Caco-2 (cell line): ENCODE measurements at regions of chr16 and their contacts with region 1.

Region 1: GRCh38 chr16:13414154-13414553 is 505.8 kb upstream of the ERCC4 start:
- DNase-seq: no peak
- H3K4me3 ChIP-seq: no peak overlapping the region
- H3K4me3 Mint-ChIP-seq: no peak overlapping the region
- H3K27ac Mint-ChIP-seq: no peak overlapping the region
- H3K4me1 ChIP-seq: no peaks in the 10 kb centered on the region
- H3K4me1 Mint-ChIP-seq: no peaks in the 10 kb centered on the region
- H3K27me3 ChIP-seq: no peaks in the 10 kb centered on the region
- H3K27me3 Mint-ChIP-seq: peaks cover 7% of the 10 kb centered on the region
- CTCF ChIP-seq: no peak

Region 2: GRCh38 chr16:13036600-13036999 is 377.6 kb before region 1 on chr16:
- CTCF ChIA-PET with region 1: no interaction called
- POLR2A ChIA-PET with region 1: no interaction called
- intact Hi-C with region 1: no loop called
- DNase-seq: peak; percentile 47 to 65
- H3K4me3 ChIP-seq: no peak overlapping the region
- H3K4me3 Mint-ChIP-seq: no peak overlapping the region
- H3K27ac Mint-ChIP-seq: no peak overlapping the region
- H3K4me1 ChIP-seq: no peaks in the 10 kb centered on the region
- H3K4me1 Mint-ChIP-seq: no peaks in the 10 kb centered on the region
- H3K27me3 ChIP-seq: no peaks in the 10 kb centered on the region
- H3K27me3 Mint-ChIP-seq: no peaks in the 10 kb centered on the region
- CTCF ChIP-seq: no peak

Region 3: DNA sequence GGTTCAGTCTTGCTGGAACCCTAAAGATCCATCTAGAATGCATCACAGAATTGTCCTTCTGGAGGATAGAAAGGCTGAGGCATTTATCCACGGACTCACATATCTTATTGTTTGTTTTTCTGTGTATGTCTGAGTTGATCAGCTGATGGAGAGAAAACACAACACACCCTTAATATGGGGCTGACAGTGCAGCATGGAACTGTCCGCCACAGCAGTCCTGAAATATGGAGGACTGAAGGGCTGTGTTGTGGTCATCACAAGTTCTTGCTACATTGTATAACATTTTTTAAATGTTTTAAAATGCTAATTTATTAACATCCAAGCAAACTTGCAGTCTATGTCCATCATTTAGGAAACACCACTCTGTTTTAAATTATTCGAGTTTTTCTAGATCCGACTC is 56.9 kb after region 1 on chr16:
- CTCF ChIA-PET with region 1: no interaction called
- POLR2A ChIA-PET with region 1: no interaction called
- intact Hi-C with region 1: no loop called
- DNase-seq: peak in 1 of 2 experiments; percentile 45
- H3K4me3 ChIP-seq: no peak overlapping the region
- H3K4me3 Mint-ChIP-seq: no peak overlapping the region
- H3K27ac Mint-ChIP-seq: no peak overlapping the region
- H3K4me1 ChIP-seq: 0 out of 2 replicates have a peak, but pooled peaks cover 7% of the 10 kb centered on the region
- H3K4me1 Mint-ChIP-seq: no peaks in the 10 kb centered on the region
- H3K27me3 ChIP-seq: no peaks in the 10 kb centered on the region; the same call in 1 of the 2 replicates
- H3K27me3 Mint-ChIP-seq: no peaks in the 10 kb centered on the region
- CTCF ChIP-seq: no peak

Region 4: DNA sequence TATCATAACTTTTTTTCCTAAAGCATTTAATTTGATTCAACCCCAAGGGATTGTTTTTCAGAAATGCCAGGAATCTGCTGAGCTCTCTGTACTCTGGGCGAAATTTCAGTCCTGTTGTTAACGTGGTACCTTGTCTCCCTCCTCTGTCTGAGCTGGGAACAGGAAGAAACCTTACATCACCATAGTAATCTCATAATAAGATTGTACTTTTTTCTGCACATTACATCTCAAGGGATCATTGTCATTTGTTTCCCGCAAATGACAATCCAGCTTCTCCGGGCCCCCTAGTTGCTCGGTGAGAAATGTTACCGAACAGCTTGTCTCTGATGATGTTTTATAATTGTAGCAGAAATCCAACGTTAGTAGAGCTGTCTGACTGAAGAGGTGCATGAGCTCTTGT is 353.1 kb after region 1 on chr16:
- CTCF ChIA-PET with region 1: no interaction called
- POLR2A ChIA-PET with region 1: no interaction called
- intact Hi-C with region 1: loop called (anchors 10 kb)
- DNase-seq: peak in 1 of 2 experiments; percentile 3
- H3K4me3 ChIP-seq: no peak overlapping the region
- H3K4me3 Mint-ChIP-seq: no peak overlapping the region
- H3K27ac Mint-ChIP-seq: no peak overlapping the region
- H3K4me1 ChIP-seq: no peaks in the 10 kb centered on the region
- H3K4me1 Mint-ChIP-seq: no peaks in the 10 kb centered on the region
- H3K27me3 ChIP-seq: no peaks in the 10 kb centered on the region
- H3K27me3 Mint-ChIP-seq: peaks cover 7% of the 10 kb centered on the region
- CTCF ChIP-seq: peak in 1 of 2 experiments; percentile 38